Activated CD4-positive, alpha-beta memory T cell treated with anti-CD3 and anti-CD28 coated beads for 36 hours (primary cell): ENCODE measurements at regions of chr2 and their contacts with region 1.

Region 1: GRCh38 chr2:26144953-26145680 is 27.8 kb upstream of the GAREM2 start:
- DNase-seq: peak; percentile 78
- H3K4me3 Mint-ChIP-seq: no peak overlapping the region
- H3K27ac Mint-ChIP-seq: no peak overlapping the region
- H3K4me1 Mint-ChIP-seq: peaks cover 2% of the 10 kb centered on the region
- H3K27me3 Mint-ChIP-seq: peaks cover 13% of the 10 kb centered on the region

Region 2: GRCh38 chr2:25951071-25951547 is 194.0 kb before region 1 on chr2:
- CTCF ChIA-PET with region 1: interaction called, 32 read pairs
- POLR2A ChIA-PET with region 1: no interaction called
- intact Hi-C with region 1: loop called (anchors 1 kb)
- DNase-seq: peak; percentile 81
- H3K4me3 Mint-ChIP-seq: no peak overlapping the region
- H3K27ac Mint-ChIP-seq: no peak overlapping the region
- H3K4me1 Mint-ChIP-seq: no peaks in the 10 kb centered on the region
- H3K27me3 Mint-ChIP-seq: no peaks in the 10 kb centered on the region